ENCODE measurements at regions of chr19 and their contacts with region 1.

Region 1: DNA sequence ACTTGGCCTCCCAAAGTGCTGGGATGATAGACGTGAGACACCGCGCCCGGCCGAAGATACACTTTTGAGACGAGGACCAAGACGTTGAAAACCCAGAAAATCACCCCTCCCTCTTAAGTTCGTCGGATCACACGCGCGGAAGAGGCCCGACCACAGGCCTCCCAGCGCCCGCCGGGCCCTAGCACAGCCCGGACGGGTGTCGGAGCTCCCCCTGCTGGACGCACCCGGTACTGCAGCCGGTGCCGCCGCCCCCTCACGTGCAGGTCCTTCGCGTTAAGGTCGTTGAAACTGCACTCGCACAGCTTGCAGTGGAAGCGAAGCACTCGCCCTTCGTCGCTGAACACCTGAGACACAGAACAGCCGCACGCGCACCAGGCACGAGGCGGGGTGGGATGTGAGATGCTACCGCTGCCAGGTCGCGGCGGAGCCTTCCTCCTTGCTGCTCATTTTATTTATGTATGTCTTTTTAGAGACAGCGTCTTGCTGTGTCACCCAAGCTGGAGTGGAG is 35.7 kb upstream of the MATK start:
- DNase-seq: peak; percentile 76 to 96 (median 89)
- ATAC-seq: peak; percentile 99
- H3K4me3 ChIP-seq: peak overlapping the region; percentile 3
- H3K4me3 Mint-ChIP-seq: peak overlapping the region in 7 of 10 donors; percentile 31 to 71 (median 66)
- H3K27ac ChIP-seq: no peak overlapping the region
- H3K27ac Mint-ChIP-seq: peak overlapping the region in 8 of 9 donors; percentile 20 to 81 (median 57)
- H3K4me1 ChIP-seq: peaks cover 0 to 13% of the 10 kb centered on the region in 2 donors
- H3K4me1 Mint-ChIP-seq: peaks cover 0 to 32% (median 18%) of the 10 kb centered on the region in 7 donors
- H3K27me3 ChIP-seq: no peaks in the 10 kb centered on the region
- H3K27me3 Mint-ChIP-seq: no peaks in the 10 kb centered on the region

Region 2: DNA sequence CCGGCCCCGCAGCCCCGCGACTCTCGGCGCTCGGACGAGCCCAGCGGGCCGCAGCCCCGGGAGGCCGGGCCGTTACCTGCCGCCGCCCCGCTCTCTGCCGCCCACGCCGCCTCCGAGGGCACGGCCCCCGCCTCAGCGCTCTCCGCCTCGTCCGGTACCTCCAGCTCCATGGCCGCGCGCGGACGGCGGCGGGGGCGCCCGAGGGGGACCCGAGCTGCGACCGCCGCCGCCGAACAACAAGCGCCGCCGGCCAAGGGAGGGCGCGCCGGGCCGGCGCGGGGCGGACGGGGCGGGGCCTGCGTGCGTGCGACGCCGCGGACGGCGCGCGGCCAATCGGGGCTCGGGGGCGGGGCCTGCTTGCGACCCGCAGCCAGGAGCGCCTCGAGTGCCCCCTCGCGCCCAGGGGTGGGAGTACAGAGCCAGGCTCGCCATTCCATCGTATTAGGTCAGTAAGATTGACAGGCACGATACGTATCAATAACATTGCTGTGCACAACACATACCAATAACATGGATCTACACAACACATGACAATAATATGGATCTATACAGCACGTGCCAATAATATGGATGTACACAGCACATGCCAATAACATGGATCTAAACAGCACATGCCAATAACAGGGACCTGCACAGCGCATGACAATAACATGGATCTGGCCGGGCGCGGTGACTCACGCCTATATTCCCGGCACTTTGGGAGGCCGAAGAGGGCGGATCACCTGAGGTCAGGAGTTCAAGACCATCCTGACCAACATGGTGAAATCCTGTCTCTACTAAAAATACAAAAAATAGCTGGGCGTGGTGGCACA is 121.5 kb before region 1 on chr19 and contains the start of gene PIP5K1C:
- CTCF ChIA-PET with region 1: no interaction called
- POLR2A ChIA-PET with region 1: no interaction called
- intact Hi-C with region 1: loop called (anchors 5 kb)
- DNase-seq: peak; percentile 82 to 98 (median 90)
- ATAC-seq: peak; percentile 100
- H3K4me3 ChIP-seq: peak within 1 kb of the TSS; percentile 66
- H3K4me3 Mint-ChIP-seq: peak within 1 kb of the TSS; percentile 88 to 97 (median 92)
- H3K27ac ChIP-seq: peak within 1 kb of the TSS; percentile 67
- H3K27ac Mint-ChIP-seq: peak within 1 kb of the TSS in 8 of 9 donors; percentile 60 to 91 (median 82)
- H3K4me1 ChIP-seq: peaks cover 0 to 9% of the 10 kb centered on the region in 2 donors
- H3K4me1 Mint-ChIP-seq: peaks cover 6 to 41% (median 28%) of the 10 kb centered on the region in 7 donors
- H3K27me3 ChIP-seq: no peaks in the 10 kb centered on the region
- H3K27me3 Mint-ChIP-seq: peaks cover 0 to 6% (median 0%) of the 10 kb centered on the region in 5 donors
- total RNA-seq, gene PIP5K1C: 21.5 to 32.4 (median 30.7) TPM

Region 3: DNA sequence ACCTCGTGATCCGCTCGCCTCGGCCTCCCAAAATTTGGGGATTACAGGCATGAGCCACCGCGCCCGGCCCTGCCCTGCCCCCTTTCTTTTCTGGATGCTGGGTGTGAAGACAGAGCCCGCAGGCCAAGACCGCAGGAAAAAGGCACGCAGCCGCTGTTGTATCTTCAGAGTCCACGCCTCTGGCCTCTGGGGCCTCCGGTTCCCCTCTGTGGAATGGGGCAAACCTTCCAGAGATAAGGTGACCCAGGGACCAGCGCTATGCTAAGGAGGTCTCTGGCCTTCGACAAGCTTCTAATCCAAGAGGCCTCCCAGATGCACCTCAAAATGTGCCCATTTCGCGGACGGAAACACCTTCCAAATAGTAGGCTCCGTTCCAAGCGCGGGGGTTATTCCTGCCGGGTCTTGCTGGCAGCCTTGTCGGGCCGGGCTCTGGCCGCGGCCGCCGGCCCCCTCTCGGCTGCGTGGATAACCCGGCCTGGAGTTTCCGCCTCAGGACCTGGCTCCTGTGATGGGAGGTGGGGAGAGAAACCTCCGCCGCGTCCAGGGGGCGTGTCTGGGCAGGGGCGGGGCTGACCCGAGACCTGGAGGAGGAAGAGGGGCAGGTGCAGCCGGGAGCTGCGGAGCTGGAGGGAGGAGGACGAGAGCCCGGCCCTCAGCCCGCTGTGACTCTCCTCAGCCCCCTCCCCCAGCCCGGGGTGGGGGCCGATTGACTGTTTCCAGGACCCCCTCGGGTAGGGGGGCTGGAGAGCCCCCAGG is 100.6 kb before region 1 on chr19:
- CTCF ChIA-PET with region 1: interaction called, 5 read pairs
- POLR2A ChIA-PET with region 1: interaction called, 3 read pairs
- intact Hi-C with region 1: loop called in 1 of 2 experiments (anchors 2 kb)
- DNase-seq: peak; percentile 72 to 88 (median 83)
- ATAC-seq: peak; percentile 99
- H3K4me3 ChIP-seq: peak overlapping the region; percentile 61
- H3K4me3 Mint-ChIP-seq: peak overlapping the region; percentile 68 to 87 (median 81)
- H3K27ac ChIP-seq: no peak overlapping the region
- H3K27ac Mint-ChIP-seq: peak overlapping the region in 1 of 9 donors; percentile 4
- H3K4me1 ChIP-seq: peaks cover 9 to 15% of the 10 kb centered on the region in 2 donors
- H3K4me1 Mint-ChIP-seq: peaks cover 0 to 21% (median 8%) of the 10 kb centered on the region in 7 donors
- H3K27me3 ChIP-seq: peaks cover 0 to 3% of the 10 kb centered on the region in 2 donors
- H3K27me3 Mint-ChIP-seq: peaks cover 0 to 54% (median 0%) of the 10 kb centered on the region in 5 donors

Region 4: DNA sequence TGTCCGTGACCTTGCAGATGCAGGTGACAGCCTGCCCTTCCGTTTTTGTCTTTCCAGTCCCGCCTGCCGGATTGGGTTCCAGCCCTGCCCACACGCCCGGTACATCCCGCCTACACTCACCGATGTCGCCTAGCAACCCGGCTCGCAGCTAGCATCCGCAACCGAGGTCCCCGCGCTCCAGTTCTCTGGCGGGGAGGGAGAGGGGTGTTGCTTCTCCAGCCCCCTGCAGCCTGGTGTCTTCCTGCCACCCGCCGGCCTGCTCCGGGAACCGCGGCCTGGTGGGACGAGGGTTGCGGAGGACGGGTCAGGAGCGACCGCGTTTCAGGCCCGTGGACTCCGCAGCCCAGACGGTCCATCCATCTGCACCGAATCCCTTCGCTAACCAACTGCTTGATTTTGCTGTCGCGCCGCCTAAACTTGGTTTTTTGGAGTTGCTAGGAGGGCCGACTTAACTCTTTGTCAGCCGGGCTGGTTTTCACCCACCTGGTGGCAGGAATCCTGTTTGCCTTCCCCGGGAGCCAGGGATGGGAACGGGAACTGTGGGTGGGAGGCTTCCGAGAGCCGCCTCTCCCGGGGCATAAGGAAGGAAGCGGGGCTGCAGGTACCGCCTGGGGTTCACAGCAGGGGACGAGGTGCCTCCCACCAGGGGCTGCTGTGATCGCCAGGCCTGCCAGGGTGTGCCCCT is 20.4 kb before region 1 on chr19:
- CTCF ChIA-PET with region 1: interaction called, 3 read pairs
- POLR2A ChIA-PET with region 1: interaction called, 4 read pairs
- intact Hi-C with region 1: loop called in 1 of 2 experiments (anchors 1 kb)
- DNase-seq: peak in 8 of 9 donors; percentile 42 to 70 (median 56)
- ATAC-seq: peak; percentile 81
- H3K4me3 ChIP-seq: peak overlapping the region; percentile 34
- H3K4me3 Mint-ChIP-seq: peak overlapping the region; percentile 56 to 77 (median 73)
- H3K27ac ChIP-seq: no peak overlapping the region
- H3K27ac Mint-ChIP-seq: peak overlapping the region in 4 of 9 donors; percentile 17 to 75 (median 42)
- H3K4me1 ChIP-seq: peaks cover 12 to 32% of the 10 kb centered on the region in 2 donors
- H3K4me1 Mint-ChIP-seq: peaks cover 16 to 51% (median 30%) of the 10 kb centered on the region in 7 donors
- H3K27me3 ChIP-seq: no peaks in the 10 kb centered on the region
- H3K27me3 Mint-ChIP-seq: peaks cover 0 to 7% (median 0%) of the 10 kb centered on the region in 5 donors